ENCODE measurements at regions of chr18 and their contacts with region 1.

Region 1: DNA sequence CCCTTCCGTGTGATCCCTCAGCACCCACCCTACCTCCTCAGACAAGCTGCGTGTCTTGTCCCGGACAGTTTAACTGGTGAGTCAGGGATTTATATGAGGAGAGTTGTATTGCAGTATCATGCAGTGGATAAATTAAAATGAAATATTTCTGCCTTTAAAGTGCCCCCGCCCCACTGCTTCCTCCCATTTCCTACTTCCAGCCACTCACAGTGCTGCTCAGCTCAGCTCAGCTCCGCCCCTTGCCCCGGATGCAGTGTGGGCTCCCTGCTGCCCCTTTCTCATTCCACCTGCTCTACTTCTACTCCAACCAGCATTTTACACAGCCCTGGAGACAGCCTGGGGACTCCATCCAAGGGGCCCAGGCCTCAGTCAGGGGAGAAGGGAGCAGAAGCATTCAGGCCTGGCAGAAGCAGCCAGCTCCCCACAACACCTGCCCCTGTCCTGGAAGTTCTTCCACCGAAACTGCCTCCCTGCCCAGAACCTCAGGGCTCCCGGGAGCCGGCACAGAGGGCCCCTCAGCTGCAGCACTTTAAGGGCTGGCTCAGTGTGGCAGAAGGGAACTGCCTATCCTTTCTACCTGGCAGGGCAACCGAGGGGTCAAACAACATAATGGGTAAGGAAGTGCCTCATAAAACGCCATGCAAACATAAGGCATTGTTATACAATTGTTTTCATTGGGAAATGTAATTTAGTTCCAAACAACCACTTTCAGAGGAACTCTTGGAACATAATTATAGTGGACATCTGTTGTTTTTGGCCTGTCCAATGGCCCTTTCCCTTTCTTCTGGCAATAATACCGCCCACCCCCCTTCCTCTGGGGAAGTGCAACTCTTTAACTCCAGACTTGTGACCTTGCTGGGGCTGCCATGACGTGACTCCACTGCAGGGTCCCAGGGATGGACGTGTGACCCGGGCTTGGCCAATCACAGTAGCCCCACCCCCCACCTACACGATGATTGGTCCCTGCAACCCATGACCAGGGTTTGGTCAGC is 102.3 kb downstream of the LIPG start:
- DNase-seq: peak; percentile 97
- H3K4me3 ChIP-seq: peak overlapping the region in 1 of 3 experiments; percentile 7
- H3K27ac ChIP-seq: peak overlapping the region; percentile 83
- H3K4me1 ChIP-seq: peaks cover 40% of the 10 kb centered on the region
- H3K27me3 ChIP-seq: peaks cover 4% of the 10 kb centered on the region in 2 experiments
- CTCF ChIP-seq: no peak
- POLR2A ChIP-seq: peak; percentile 67

Region 2: DNA sequence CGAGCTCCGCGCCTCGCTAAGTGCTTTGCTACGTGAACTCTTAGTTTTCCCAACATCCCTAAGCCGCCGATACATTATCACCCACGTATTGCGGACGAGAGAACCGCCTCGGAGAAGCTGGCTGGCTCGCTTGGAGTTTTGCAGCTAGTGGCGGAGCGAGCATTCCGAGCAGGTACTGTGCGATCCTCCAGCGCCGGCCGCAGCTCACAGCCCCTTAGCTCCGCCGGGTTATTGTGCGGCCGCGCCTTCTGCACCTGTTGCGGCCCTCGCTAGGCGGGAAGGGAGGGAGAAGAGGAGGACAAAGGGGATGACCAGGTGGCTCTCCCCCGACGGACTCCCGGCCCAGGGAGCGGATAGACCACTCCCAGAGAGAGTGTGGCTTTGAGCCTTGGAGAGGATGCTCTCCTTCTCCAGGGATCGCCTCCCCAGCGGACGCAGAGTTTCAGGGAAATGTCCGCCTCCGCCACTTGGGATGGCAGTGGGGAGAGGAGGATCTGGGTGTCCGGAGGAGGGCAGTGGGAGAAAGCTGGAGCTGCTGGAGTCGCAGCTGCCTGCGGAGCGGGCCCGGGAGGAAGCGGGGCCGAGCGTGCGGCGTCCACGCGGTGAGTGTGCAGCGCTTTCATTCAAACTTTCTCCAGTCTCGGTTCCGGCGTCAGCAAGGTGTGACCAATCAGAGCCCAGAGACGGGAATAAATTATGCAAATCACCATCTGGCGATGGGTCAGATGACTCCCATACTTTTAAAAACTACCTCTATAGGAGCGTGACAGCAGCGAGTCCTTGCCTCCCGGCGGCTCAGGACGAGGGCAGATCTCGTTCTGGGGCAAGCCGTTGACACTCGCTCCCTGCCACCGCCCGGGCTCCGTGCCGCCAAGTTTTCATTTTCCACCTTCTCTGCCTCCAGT is 102.7 kb before region 1 on chr18 and contains the start of gene LIPG:
- CTCF ChIA-PET with region 1: no interaction called
- POLR2A ChIA-PET with region 1: no interaction called
- dilution Hi-C with region 1: no loop called
- intact Hi-C with region 1: loop called (anchors 1 kb)
- DNase-seq: peak; percentile 74
- H3K4me3 ChIP-seq: peak within 1 kb of the TSS; percentile 34 to 83 (median 67)
- H3K27ac ChIP-seq: peak within 1 kb of the TSS; percentile 49
- H3K4me1 ChIP-seq: peaks cover 37% of the 10 kb centered on the region
- H3K27me3 ChIP-seq: no peaks in the 10 kb centered on the region
- CTCF ChIP-seq: no peak
- POLR2A ChIP-seq: peak; percentile 69
- total RNA-seq, gene LIPG: 80.6 and 96.2 TPM in 2 replicates

Region 3: DNA sequence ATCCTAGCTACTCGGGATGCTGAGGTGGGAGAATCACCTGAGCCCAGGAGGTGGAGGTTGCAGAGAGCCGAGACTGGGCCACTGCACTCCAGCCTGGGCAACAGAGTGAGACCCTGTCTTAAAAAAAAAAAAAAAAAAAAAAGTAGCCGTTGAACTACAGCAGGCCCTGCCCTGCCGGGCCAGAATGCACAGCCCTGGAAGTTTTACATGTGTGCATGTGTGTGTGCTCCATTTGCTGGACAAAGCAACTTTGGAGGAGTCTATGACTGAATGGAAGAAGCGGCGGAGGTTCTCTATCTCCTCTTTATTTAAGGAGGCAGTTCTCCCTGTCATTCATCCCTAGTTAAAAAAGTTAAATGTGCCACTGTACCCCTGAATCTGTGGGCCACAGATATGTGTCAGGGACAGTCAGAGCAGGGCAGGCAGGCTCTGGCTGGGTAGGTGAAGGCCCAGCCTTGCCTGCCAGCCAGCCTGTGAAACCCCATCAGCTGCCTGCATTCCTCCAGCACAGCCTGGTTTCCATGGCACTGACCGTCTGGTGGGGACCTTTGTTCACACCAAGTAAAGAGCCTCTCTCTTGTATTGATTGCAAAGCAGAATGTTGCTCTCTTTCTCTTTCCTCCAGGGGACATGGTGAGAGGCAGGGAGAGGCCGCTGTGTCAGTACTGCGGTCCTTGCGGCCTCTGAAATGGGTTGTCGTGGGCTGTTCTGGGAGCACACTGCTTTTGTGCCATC is 91.4 kb before region 1 on chr18:
- CTCF ChIA-PET with region 1: no interaction called
- POLR2A ChIA-PET with region 1: no interaction called
- dilution Hi-C with region 1: no loop called
- intact Hi-C with region 1: no loop called
- DNase-seq: no peak
- H3K4me3 ChIP-seq: no peak overlapping the region
- H3K27ac ChIP-seq: no peak overlapping the region
- H3K4me1 ChIP-seq: no peaks in the 10 kb centered on the region
- H3K27me3 ChIP-seq: no peaks in the 10 kb centered on the region
- CTCF ChIP-seq: no peak
- POLR2A ChIP-seq: no peak

Region 4: GRCh38 chr18:49677762-49678413 is 13.7 kb after region 1 on chr18:
- CTCF ChIA-PET with region 1: interaction called, 5 read pairs
- POLR2A ChIA-PET with region 1: no interaction called
- dilution Hi-C with region 1: no loop called
- intact Hi-C with region 1: loop called (anchors 1 kb)
- DNase-seq: peak; percentile 53
- H3K4me3 ChIP-seq: no peak overlapping the region
- H3K27ac ChIP-seq: peak overlapping the region; percentile 44
- H3K4me1 ChIP-seq: peaks cover 25% of the 10 kb centered on the region
- H3K27me3 ChIP-seq: peaks cover 3 to 4% of the 10 kb centered on the region in 2 experiments
- CTCF ChIP-seq: no peak
- POLR2A ChIP-seq: no peak

Region 5: DNA sequence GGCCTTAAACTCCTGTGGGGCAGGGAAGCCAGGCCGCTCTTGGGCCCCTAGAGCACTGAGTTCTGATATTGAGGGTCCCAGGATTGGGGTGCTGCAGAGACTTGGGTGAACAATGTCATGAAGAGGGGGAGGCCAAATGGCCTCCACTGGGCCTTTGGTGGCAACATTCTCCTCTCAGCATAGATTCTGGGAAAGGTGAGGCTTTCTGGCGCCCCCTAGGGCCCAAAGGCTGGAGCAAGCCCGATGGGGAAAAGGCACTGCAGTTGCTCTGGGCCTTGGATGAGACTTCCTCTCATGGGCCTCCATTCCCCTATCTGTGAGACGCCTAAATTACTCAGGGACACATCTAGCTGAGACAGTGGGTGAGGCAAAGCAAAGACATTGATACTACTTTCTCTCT is 64.3 kb after region 1 on chr18:
- CTCF ChIA-PET with region 1: interaction called, 4 read pairs
- POLR2A ChIA-PET with region 1: interaction called, 5 read pairs
- dilution Hi-C with region 1: no loop called
- intact Hi-C with region 1: loop called (anchors 1 kb)
- DNase-seq: peak; percentile 54
- H3K4me3 ChIP-seq: no peak overlapping the region
- H3K27ac ChIP-seq: no peak overlapping the region
- H3K4me1 ChIP-seq: peaks cover 33% of the 10 kb centered on the region
- H3K27me3 ChIP-seq: no peaks in the 10 kb centered on the region
- CTCF ChIP-seq: peak; percentile 84 to 87
- POLR2A ChIP-seq: no peak

Measured in endothelial cell of umbilical vein (primary cell).